ENCODE measurements at regions of chr4 and their contacts with region 1.

Region 1: GRCh38 chr4:184364100-184364921 is 110.0 kb downstream of the IRF2 start:
- DNase-seq: no peak
- H3K4me3 ChIP-seq: no peak overlapping the region
- H3K27ac ChIP-seq: no peak overlapping the region
- H3K4me1 ChIP-seq: no peaks in the 10 kb centered on the region
- H3K27me3 ChIP-seq: no peaks in the 10 kb centered on the region
- CTCF ChIP-seq: no peak

Region 2: DNA sequence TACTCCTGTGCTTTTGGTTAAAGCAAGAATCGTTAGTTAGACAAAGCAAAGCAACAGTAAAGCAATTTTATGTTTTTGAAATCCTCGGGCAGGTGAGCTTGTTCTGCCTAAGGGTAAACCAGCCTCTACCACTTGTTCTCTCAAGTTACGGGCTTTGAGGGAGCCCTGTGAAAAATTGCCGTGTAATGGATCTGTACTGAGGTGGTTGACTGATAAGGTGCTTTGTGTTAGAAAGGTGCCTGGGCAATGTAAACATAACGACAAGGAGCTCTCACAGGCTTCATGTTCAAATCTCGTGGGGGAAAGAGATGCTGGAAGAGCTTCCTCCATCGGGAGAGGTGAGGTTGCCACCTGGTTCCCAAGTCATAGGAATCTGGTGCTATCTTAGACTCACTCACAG is 593.4 kb before region 1 on chr4:
- CTCF ChIA-PET with region 1: no interaction called
- dilution Hi-C with region 1: no loop called
- in situ Hi-C with region 1: no loop called
- intact Hi-C with region 1: no loop called
- DNase-seq: no peak
- H3K4me3 ChIP-seq: no peak overlapping the region
- H3K27ac ChIP-seq: no peak overlapping the region
- H3K4me1 ChIP-seq: no peaks in the 10 kb centered on the region
- H3K27me3 ChIP-seq: no peaks in the 10 kb centered on the region
- CTCF ChIP-seq: no peak

Region 3: GRCh38 chr4:184275766-184276165 is 88.5 kb before region 1 on chr4:
- CTCF ChIA-PET with region 1: no interaction called
- dilution Hi-C with region 1: loop called (anchors 5 kb)
- in situ Hi-C with region 1: no loop called
- intact Hi-C with region 1: no loop called
- DNase-seq: peak; percentile 47
- H3K4me3 ChIP-seq: no peak overlapping the region
- H3K27ac ChIP-seq: no peak overlapping the region
- H3K4me1 ChIP-seq: no peaks in the 10 kb centered on the region
- H3K27me3 ChIP-seq: no peaks in the 10 kb centered on the region
- CTCF ChIP-seq: no peak

Region 4: GRCh38 chr4:184437565-184438265 is 73.4 kb after region 1 on chr4:
- CTCF ChIA-PET with region 1: no interaction called
- dilution Hi-C with region 1: no loop called
- in situ Hi-C with region 1: no loop called
- intact Hi-C with region 1: no loop called
- DNase-seq: no peak
- H3K4me3 ChIP-seq: no peak overlapping the region
- H3K27ac ChIP-seq: no peak overlapping the region
- H3K4me1 ChIP-seq: no peaks in the 10 kb centered on the region
- H3K27me3 ChIP-seq: no peaks in the 10 kb centered on the region
- CTCF ChIP-seq: no peak

Measured in mammary epithelial cell (primary cell).